Activated T-helper 1 cell treated with anti-CD3 and anti-CD28 coated beads, Interleukin-12 subunit alpha, Interleukin-12 subunit beta, Interleukin-2, Interleukin-4 antibody, amounts not matched to agents 30 ng/mL and 10 ng/mL and 1 ng/mL, durations not matched to agents 14 hours and 24 hours and 36 hours (primary cell): ENCODE measurements at regions of chr11 and their contacts with region 1.

Region 1: GRCh38 chr11:236774-237767 is at the start of gene PSMD13:
- DNase-seq: peak; percentile 84
- H3K4me3 Mint-ChIP-seq: peak within 1 kb of the TSS; percentile 97
- H3K27ac Mint-ChIP-seq: peak within 1 kb of the TSS; percentile 98
- H3K4me1 Mint-ChIP-seq: peaks cover 46% of the 10 kb centered on the region
- H3K27me3 Mint-ChIP-seq: peaks cover 2% of the 10 kb centered on the region
- total RNA-seq, gene PSMD13: 261 and 266 TPM in 2 replicates

Region 2: GRCh38 chr11:288328-289144 is 51.5 kb after region 1 on chr11 and contains the start of gene PGGHG:
- intact Hi-C with region 1: loop called (anchors 5 kb)
- DNase-seq: peak; percentile 68
- H3K4me3 Mint-ChIP-seq: peak within 1 kb of the TSS; percentile 95
- H3K27ac Mint-ChIP-seq: peak within 1 kb of the TSS; percentile 98
- H3K4me1 Mint-ChIP-seq: peaks cover 37% of the 10 kb centered on the region
- H3K27me3 Mint-ChIP-seq: peaks cover 6% of the 10 kb centered on the region
- total RNA-seq, gene PGGHG: 164 and 167 TPM in 2 replicates

Region 3: GRCh38 chr11:355581-356458 is 118.7 kb after region 1 on chr11:
- intact Hi-C with region 1: loop called (anchors 5 kb)
- DNase-seq: peak; percentile 85
- H3K4me3 Mint-ChIP-seq: peak overlapping the region; percentile 86
- H3K27ac Mint-ChIP-seq: peak overlapping the region; percentile 93
- H3K4me1 Mint-ChIP-seq: peaks cover 26% of the 10 kb centered on the region
- H3K27me3 Mint-ChIP-seq: peaks cover 4% of the 10 kb centered on the region

Region 4: GRCh38 chr11:416757-417621 is 179.9 kb after region 1 on chr11:
- intact Hi-C with region 1: loop called (anchors 2 kb)
- DNase-seq: peak; percentile 48
- H3K4me3 Mint-ChIP-seq: peak overlapping the region; percentile 65
- H3K27ac Mint-ChIP-seq: peak overlapping the region; percentile 44
- H3K4me1 Mint-ChIP-seq: peaks cover 30% of the 10 kb centered on the region
- H3K27me3 Mint-ChIP-seq: no peaks in the 10 kb centered on the region